Panc1 (cell line): ENCODE measurements at regions of chr19 and their contacts with region 1.

Region 1: DNA sequence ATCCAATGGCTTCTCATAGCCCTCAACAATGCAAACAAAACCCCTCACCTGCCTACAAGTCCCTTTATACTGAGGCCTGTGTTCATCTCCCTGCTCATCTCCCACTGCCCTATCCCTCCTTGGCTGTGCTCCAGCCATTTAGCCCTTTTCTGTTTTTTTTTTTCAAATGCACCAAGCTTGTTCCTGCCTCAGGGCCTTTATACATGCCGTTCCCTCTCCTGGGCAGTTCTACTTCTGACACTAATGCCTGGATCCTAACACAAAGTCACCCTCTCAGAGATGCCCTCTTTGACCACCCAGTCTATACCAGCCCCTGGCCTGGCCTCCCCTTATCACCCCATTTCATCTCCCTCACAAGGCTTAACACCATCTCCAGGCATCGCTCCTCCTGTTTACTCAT is 26.9 kb downstream of the ZNF574 start:
- DNase-seq: no peak
- ATAC-seq: no peak
- H3K4me3 ChIP-seq: no peak overlapping the region
- H3K27ac ChIP-seq: no peak overlapping the region
- H3K4me1 ChIP-seq: no peaks in the 10 kb centered on the region
- H3K27me3 ChIP-seq: no peaks in the 10 kb centered on the region
- CTCF ChIP-seq: no peak

Region 2: GRCh38 chr19:42051166-42052118 is 51.4 kb before region 1 on chr19:
- CTCF ChIA-PET with region 1: no interaction called
- POLR2A ChIA-PET with region 1: interaction called, 10 read pairs
- in situ Hi-C with region 1: no loop called
- intact Hi-C with region 1: no loop called
- DNase-seq: no peak
- ATAC-seq: peak; percentile 39; the same call in 1 of the 2 replicates
- H3K4me3 ChIP-seq: no peak overlapping the region
- H3K27ac ChIP-seq: no peak overlapping the region
- H3K4me1 ChIP-seq: peaks cover 3% of the 10 kb centered on the region; the same call in 1 of the 2 replicates
- H3K27me3 ChIP-seq: no peaks in the 10 kb centered on the region
- CTCF ChIP-seq: no peak